Activated CD8-positive, alpha-beta T cell treated with anti-CD3 and anti-CD28 coated beads for 36 hours (primary cell): ENCODE measurements at regions of chr14 and their contacts with region 1.

Region 1: DNA sequence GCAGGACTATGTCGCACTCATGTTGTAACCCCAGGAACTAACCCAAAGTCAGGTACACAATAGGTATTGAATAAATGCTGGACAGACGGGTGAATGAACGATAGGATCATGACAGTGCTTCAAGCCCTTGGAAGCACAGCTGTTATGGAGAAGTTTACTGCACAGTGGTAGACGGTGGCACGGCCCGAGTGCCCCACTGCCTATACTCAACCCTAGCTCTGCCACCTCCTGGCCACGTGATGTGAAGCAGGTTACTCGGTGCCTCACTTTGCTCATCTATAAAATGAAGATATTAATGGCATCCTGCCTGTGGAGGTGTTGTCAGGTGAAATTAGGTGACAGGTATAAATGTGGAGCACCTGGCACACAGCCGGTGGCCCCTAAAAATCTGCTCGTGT is 5.8 kb downstream of the ASB2 start:
- DNase-seq: peak; percentile 80
- ATAC-seq: peak; percentile 78
- H3K4me3 Mint-ChIP-seq: peak overlapping the region; percentile 76
- H3K27ac Mint-ChIP-seq: peak overlapping the region; percentile 95
- H3K4me1 Mint-ChIP-seq: peaks cover 67% of the 10 kb centered on the region
- H3K27me3 Mint-ChIP-seq: no peaks in the 10 kb centered on the region
- CTCF ChIP-seq: peak; percentile 80

Region 2: GRCh38 chr14:93857500-93858283 is 112.9 kb before region 1 on chr14:
- CTCF ChIA-PET with region 1: no interaction called
- POLR2A ChIA-PET with region 1: no interaction called
- intact Hi-C with region 1: no loop called
- DNase-seq: no peak
- ATAC-seq: no peak
- H3K4me3 Mint-ChIP-seq: no peak overlapping the region
- H3K27ac Mint-ChIP-seq: no peak overlapping the region
- H3K4me1 Mint-ChIP-seq: no peaks in the 10 kb centered on the region
- H3K27me3 Mint-ChIP-seq: peaks cover 5% of the 10 kb centered on the region
- CTCF ChIP-seq: no peak

Region 3: GRCh38 chr14:93946104-93946503 is 24.4 kb before region 1 on chr14:
- CTCF ChIA-PET with region 1: interaction called, 290 read pairs
- POLR2A ChIA-PET with region 1: interaction called, 4 read pairs
- intact Hi-C with region 1: loop called (anchors 5 kb)
- DNase-seq: no peak
- ATAC-seq: no peak
- H3K4me3 Mint-ChIP-seq: no peak overlapping the region
- H3K27ac Mint-ChIP-seq: no peak overlapping the region
- H3K4me1 Mint-ChIP-seq: peaks cover 5% of the 10 kb centered on the region
- H3K27me3 Mint-ChIP-seq: no peaks in the 10 kb centered on the region
- CTCF ChIP-seq: no peak

Region 4: GRCh38 chr14:93953263-93953662 is 17.3 kb before region 1 on chr14:
- CTCF ChIA-PET with region 1: interaction called, 69 read pairs
- POLR2A ChIA-PET with region 1: interaction called, 180 read pairs
- intact Hi-C with region 1: no loop called
- DNase-seq: no peak
- ATAC-seq: no peak
- H3K4me3 Mint-ChIP-seq: peak overlapping the region; percentile 83
- H3K27ac Mint-ChIP-seq: no peak overlapping the region
- H3K4me1 Mint-ChIP-seq: peaks cover 70% of the 10 kb centered on the region
- H3K27me3 Mint-ChIP-seq: no peaks in the 10 kb centered on the region
- CTCF ChIP-seq: peak; percentile 14

Region 5: DNA sequence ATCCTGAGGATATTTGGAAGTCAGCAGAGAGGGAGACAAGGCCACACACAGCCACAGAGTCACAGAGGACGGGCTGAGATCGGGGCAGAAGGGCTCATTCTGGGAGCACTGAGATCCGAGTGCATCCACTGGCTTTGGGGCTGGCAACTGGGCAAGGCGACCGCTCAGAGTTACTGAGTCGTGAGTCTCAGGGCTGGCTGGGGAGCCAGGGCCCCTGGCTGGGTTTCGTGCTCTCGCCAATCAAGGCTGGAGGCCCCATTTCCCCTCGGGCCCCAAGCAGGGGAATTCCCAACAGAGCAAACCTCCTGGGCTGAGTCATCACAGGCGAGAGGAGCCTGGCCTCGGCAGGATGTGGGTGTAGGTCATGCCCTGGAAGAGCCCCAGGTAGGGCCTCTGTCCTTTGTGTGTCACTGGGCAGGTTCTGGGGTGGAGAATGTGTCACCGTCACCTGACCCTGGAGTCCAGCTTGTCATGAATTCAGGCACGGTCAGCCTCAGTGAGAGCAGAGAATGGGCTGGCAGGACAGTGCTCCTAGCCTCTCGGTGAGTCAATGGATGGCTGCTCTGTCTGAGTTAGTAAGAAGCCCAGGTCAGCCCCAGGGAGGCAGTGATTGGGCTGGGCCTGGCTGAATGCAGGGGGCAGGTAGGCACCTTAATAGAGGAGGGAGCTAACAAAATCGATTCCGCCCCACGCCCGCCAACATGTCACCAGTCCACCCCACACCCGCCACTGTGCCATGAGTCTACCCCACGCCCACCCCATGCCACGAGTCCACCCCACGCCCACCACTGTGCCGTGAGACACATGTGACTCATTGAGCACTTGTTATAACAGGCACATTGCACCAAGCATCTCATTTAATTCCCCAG is 11.1 kb before region 1 on chr14:
- CTCF ChIA-PET with region 1: interaction called, 69 read pairs
- POLR2A ChIA-PET with region 1: interaction called, 180 read pairs
- intact Hi-C with region 1: no loop called
- DNase-seq: peak; percentile 98
- ATAC-seq: peak; percentile 69
- H3K4me3 Mint-ChIP-seq: peak overlapping the region; percentile 66
- H3K27ac Mint-ChIP-seq: peak overlapping the region; percentile 99
- H3K4me1 Mint-ChIP-seq: peaks cover 93% of the 10 kb centered on the region
- H3K27me3 Mint-ChIP-seq: no peaks in the 10 kb centered on the region
- CTCF ChIP-seq: no peak

Region 6: DNA sequence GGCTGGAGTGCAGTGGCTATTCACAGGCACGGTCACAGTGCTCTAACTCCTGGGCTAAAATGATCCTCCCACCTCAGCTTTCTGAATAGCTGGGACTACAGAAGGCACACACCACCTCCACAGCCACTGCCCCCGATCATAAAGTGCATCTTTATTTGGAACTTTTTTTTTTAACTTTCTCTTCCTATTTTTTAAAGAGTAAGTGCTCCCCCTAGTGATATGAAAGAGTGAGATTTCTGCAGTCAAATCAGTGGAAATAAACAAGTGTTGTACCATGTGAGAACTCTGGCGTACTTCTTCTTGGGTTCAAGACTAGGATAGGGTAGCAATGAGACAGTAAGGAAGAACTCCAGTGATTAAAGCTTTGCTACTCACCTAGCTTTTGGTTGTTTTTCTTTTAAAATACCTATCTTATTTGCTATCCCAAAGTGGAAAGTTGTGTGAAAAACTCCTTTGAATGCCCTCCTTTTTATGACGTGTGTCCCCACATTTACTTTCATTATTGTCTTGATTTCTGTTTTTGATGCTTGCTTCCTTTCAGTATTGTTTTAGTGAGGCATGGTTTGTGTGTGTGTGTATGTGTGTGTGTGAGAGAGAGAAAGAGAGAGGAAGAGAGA is 210.2 kb after region 1 on chr14:
- CTCF ChIA-PET with region 1: no interaction called
- POLR2A ChIA-PET with region 1: no interaction called
- intact Hi-C with region 1: no loop called
- DNase-seq: no peak
- ATAC-seq: peak; percentile 81
- H3K4me3 Mint-ChIP-seq: peak overlapping the region; percentile 47
- H3K27ac Mint-ChIP-seq: peak overlapping the region; percentile 5
- H3K4me1 Mint-ChIP-seq: peaks cover 13% of the 10 kb centered on the region
- H3K27me3 Mint-ChIP-seq: peaks cover 19% of the 10 kb centered on the region
- CTCF ChIP-seq: peak; percentile 73

Region 7: GRCh38 chr14:95255487-95255886 is 1284.9 kb after region 1 on chr14:
- CTCF ChIA-PET with region 1: no interaction called
- POLR2A ChIA-PET with region 1: no interaction called
- intact Hi-C with region 1: no loop called
- DNase-seq: peak; percentile 46
- ATAC-seq: no peak
- H3K4me3 Mint-ChIP-seq: no peak overlapping the region
- H3K27ac Mint-ChIP-seq: no peak overlapping the region
- H3K4me1 Mint-ChIP-seq: peaks cover 3% of the 10 kb centered on the region
- H3K27me3 Mint-ChIP-seq: no peaks in the 10 kb centered on the region
- CTCF ChIP-seq: no peak